Body of pancreas (tissue), 4 donors: ENCODE measurements at regions of chr22 and their contacts with region 1.

Region 1: DNA sequence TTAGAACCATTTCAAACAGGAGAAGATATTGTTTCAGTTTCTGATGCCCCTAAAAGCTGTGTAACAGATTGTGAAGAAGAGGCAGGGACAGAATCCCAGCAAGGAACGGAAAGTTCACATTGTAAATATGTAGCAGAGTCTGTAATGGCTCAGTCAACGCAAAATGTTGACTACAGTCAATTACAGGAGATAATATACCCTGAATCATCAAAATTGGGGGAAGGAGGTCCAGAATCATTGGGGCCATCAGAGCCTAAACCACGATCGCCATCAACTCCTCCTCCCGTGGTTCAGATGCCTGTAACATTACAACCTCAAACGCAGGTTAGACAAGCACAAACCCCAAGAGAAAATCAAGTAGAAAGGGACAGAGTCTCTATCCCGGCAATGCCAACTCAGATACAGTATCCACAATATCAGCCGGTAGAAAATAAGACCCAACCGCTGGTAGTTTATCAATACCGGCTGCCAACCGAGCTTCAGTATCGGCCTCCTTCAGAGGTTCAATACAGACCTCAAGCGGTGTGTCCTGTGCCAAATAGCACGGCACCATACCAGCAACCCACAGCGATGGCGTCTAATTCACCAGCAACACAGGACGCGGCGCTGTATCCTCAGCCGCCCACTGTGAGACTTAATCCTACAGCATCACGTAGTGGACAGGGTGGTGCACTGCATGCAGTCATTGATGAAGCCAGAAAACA is 40.8 kb downstream of the IGLL1 start:
- DNase-seq: peak; percentile 81 to 89 (median 86)
- ATAC-seq: peak; percentile 100
- H3K4me3 ChIP-seq: no peak overlapping the region
- H3K27ac ChIP-seq: no peak overlapping the region
- H3K4me1 ChIP-seq: peaks cover 14% of the 10 kb centered on the region
- H3K27me3 ChIP-seq: no peaks in the 10 kb centered on the region
- CTCF ChIP-seq: peak; percentile 75 to 97 (median 92)
- POLR2A ChIP-seq: no peak

Region 2: GRCh38 chr22:23402275-23403151 is 136.8 kb before region 1 on chr22:
- intact Hi-C with region 1: loop called (anchors 10 kb)
- DNase-seq: peak; percentile 78 to 88 (median 81)
- ATAC-seq: peak; percentile 91
- H3K4me3 ChIP-seq: peak overlapping the region in 1 of 2 donors; percentile 5
- H3K27ac ChIP-seq: peak overlapping the region in 3 of 4 donors; percentile 7 to 54 (median 34)
- H3K4me1 ChIP-seq: peaks cover 6% of the 10 kb centered on the region
- H3K27me3 ChIP-seq: no peaks in the 10 kb centered on the region
- CTCF ChIP-seq: peak; percentile 41 to 85 (median 55)
- POLR2A ChIP-seq: peak in 2 of 3 donors; percentile 9 to 36

Region 3: DNA sequence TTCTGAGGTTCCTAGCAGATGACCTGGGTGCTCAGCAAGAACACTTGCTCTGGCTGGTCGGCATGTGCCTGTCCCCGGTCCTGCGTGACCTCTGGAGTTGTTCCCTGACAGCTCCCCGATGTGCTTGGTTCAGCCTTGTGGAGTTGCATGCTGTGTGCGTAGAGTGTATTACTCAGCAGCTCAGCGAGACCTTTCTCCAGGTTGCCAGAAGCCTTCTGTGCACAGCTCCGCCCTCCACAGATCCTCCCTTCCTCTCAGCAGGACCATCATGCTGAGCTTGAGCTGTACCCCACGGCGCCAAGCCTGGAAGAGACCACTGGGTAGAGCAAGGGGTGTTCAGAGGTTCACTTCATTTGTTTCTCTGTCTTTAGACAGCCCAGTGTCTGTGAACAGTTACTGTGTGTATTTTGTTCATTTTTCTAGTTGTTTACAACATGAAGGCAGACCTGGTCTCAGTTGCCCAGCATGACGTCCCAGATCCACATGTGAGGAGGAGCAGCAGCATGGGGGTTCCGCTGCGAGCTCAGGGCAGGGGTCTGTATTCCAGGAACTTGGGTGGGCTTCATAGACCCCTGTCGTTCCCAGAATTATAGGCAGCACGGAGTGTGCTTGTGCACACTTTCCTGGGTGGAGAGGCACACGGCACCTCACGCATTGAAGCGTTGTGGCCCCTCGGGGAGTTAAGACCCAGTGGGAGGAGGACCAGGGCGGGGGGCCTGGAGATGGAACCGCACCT is 107.8 kb before region 1 on chr22:
- intact Hi-C with region 1: loop called (anchors 10 kb)
- DNase-seq: peak in 1 of 4 donors; percentile 15
- ATAC-seq: no peak
- H3K4me3 ChIP-seq: no peak overlapping the region
- H3K27ac ChIP-seq: no peak overlapping the region
- H3K4me1 ChIP-seq: peaks cover 5% of the 10 kb centered on the region
- H3K27me3 ChIP-seq: no peaks in the 10 kb centered on the region
- CTCF ChIP-seq: no peak
- POLR2A ChIP-seq: no peak

Region 4: GRCh38 chr22:23504516-23504915 is 34.8 kb before region 1 on chr22:
- intact Hi-C with region 1: no loop called
- DNase-seq: no peak
- ATAC-seq: no peak
- H3K4me3 ChIP-seq: no peak overlapping the region
- H3K27ac ChIP-seq: no peak overlapping the region
- H3K4me1 ChIP-seq: no peaks in the 10 kb centered on the region
- H3K27me3 ChIP-seq: no peaks in the 10 kb centered on the region
- CTCF ChIP-seq: no peak
- POLR2A ChIP-seq: no peak

Region 5: GRCh38 chr22:23849009-23850006 is 310.0 kb after region 1 on chr22:
- intact Hi-C with region 1: loop called (anchors 10 kb)
- DNase-seq: peak; percentile 81 to 90 (median 88)
- ATAC-seq: peak; percentile 89
- H3K4me3 ChIP-seq: no peak overlapping the region
- H3K27ac ChIP-seq: peak overlapping the region in 1 of 4 donors; percentile 9
- H3K4me1 ChIP-seq: peaks cover 15% of the 10 kb centered on the region
- H3K27me3 ChIP-seq: no peaks in the 10 kb centered on the region
- CTCF ChIP-seq: peak; percentile 94 to 98 (median 97)
- POLR2A ChIP-seq: no peak